Ascending aorta (tissue), 2 donors: ENCODE measurements at regions of chr3 and their contacts with region 1.

Region 1: DNA sequence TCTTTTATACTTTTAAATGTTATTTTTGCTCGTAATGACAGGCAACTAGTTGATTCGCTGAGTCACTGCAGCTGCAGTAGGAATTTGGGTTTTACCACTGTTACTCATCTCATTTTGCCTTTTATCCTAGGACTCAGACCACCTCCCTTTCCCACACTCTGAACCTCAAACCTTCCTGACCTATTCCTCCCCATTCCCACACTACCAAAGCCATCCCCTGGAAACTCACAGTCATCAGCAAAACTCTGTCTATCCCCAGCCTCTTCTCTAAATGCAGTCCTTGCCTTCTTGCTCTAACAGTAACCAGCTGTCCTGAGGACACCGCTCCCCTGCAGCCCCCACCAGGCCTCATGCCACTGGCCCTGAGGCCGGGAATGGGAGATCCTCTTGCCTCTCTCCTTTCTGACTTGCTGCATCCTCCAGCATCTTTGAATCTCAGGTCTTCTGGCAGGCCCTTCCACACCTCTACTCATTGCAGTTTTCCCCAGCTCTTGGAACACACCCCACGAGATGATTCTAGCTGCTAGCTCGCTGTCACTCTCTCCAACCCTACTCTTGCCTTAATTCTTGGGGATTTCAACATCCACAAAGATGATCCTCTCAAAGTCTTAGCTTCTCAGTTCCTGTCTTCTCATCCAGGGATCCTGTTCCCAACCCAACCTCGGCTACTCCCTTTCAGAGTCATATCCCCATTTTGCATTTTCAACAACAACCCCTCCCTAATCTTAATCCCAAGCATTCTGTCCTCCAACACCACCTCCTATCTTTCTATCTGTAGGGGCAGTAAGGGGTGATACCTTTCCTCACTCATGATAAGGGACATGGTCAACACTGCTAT is 55.9 kb upstream of the C3orf80 start:
- DNase-seq: no peak
- H3K4me3 ChIP-seq: no peak overlapping the region
- H3K27ac ChIP-seq: no peak overlapping the region
- H3K4me1 ChIP-seq: no peaks in the 10 kb centered on the region
- H3K27me3 ChIP-seq: no peaks in the 10 kb centered on the region
- CTCF ChIP-seq: no peak

Region 2: DNA sequence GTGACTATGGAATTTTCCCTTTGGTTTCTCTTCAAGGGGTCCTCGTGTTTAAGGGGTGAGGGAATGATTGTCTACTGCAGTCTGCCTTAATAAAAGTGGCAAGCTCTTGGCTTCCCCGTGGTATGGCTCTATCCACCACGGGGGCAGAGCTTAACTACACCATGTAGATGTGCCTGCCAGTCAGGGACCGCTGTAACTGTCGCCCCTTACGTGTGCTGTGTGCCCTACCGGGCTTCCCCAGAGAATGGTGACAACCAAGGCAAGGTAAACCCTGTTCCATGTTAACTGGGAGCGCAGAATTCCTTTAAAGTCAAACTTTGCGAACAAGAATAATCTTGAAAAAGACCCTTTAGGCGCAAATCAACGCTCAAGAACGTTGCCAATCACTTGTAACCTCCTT is 54.9 kb after region 1 on chr3:
- intact Hi-C with region 1: loop called (anchors 5 kb)
- DNase-seq: no peak
- H3K4me3 ChIP-seq: peak overlapping the region in 1 of 2 donors; percentile 68
- H3K27ac ChIP-seq: no peak overlapping the region
- H3K4me1 ChIP-seq: peaks cover 8% of the 10 kb centered on the region in 2 donors
- H3K27me3 ChIP-seq: no peaks in the 10 kb centered on the region
- CTCF ChIP-seq: no peak